ENCODE measurements at regions of chr20 and their contacts with region 1.

Region 1: GRCh38 chr20:44187051-44187762 is at the start of gene JPH2:
- DNase-seq: no peak
- CTCF ChIP-seq: no peak

Region 2: GRCh38 chr20:43448748-43449535 is 738.3 kb before region 1 on chr20:
- CTCF ChIA-PET with region 1: interaction called, 17 read pairs
- POLR2A ChIA-PET with region 1: no interaction called
- DNase-seq: peak; percentile 66
- CTCF ChIP-seq: peak; percentile 75

Region 3: GRCh38 chr20:44170816-44171410 is 16.3 kb before region 1 on chr20:
- CTCF ChIA-PET with region 1: interaction called, 29 read pairs
- POLR2A ChIA-PET with region 1: no interaction called
- DNase-seq: no peak
- CTCF ChIP-seq: no peak

Region 4: DNA sequence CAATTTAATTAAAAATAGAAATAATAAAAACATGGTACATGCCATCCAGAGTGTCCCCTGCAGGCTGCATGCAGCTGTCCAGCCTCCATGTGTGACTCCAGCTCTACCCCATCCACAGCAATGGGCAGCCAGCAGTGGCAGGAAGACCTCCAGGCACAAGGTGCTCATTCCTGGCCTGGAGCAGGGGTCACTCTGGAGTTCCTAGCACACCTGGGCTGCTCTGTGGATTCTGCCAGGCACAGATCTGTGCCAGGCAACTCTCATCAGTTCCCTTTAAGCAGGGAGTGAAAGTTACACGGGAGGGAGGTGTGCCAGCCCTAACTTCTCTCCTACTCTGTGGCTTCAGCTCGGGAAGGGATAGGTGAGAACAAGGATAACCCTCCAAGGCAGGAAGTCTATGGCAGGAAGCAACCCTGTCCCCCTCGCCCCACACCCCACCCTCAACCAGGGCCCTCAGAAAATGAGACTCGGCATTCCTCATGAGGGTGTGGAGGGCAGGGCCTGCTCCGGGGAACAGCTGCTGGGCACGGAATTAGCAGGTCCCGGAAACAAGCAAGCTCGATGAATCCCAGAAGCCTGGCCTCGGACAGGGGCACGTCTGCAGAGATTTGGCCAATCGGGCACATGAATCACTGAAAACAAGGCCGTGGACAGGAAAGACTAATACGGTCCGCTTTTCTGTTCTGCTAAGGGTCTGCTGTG is 10.2 kb before region 1 on chr20:
- CTCF ChIA-PET with region 1: interaction called, 29 read pairs
- POLR2A ChIA-PET with region 1: no interaction called
- DNase-seq: no peak
- CTCF ChIP-seq: no peak

Region 5: GRCh38 chr20:44209686-44210421 is 22.6 kb after region 1 on chr20:
- CTCF ChIA-PET with region 1: interaction called, 14 read pairs
- POLR2A ChIA-PET with region 1: no interaction called
- DNase-seq: no peak
- CTCF ChIP-seq: no peak

Region 6: DNA sequence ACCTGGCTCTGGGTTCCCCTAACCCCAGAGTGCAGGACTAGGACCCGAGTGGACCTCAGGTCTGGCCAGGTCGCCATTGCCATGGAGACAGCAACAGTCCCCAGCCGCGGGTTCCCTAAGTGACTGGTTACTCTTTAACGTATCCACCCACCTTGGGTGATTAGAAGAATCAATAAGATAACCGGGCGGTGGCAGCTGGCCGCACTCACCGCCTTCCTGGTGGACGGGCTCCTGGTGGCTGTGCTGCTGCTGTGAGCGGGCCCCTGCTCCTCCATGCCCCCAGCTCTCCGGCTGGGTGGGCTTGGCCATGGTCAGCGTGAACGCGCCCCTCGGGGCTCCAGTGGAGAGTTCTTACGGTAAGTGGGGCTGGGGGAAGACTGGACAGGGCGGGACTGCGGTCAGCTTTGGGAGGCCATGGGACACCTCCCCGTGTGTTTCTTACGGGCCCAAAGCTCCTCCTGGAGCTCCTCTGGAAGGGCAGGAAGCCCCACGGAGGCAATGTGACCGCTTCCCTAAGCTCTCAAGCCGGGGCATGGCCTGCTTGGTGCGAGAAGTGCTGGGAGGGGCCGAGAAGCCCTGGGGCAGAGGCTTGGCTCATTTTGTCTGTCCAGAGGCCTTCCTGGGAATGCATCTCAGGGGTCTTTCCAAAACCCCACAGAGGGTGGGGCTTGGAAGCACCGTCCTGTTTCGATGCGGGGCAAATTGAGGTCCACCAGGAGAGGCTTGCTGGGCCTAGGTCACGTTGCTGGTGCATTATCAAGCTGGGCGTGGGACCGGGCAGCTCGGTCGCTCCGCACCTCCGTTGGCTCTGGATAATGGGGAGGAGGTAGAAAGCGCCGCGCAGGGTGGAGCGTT is 168.5 kb after region 1 on chr20 and contains the start of gene HNF4A:
- CTCF ChIA-PET with region 1: no interaction called
- POLR2A ChIA-PET with region 1: no interaction called
- DNase-seq: no peak
- CTCF ChIP-seq: no peak